Vagina (tissue), 2 donors: ENCODE measurements at regions of chr1 and their contacts with region 1.

Region 1: DNA sequence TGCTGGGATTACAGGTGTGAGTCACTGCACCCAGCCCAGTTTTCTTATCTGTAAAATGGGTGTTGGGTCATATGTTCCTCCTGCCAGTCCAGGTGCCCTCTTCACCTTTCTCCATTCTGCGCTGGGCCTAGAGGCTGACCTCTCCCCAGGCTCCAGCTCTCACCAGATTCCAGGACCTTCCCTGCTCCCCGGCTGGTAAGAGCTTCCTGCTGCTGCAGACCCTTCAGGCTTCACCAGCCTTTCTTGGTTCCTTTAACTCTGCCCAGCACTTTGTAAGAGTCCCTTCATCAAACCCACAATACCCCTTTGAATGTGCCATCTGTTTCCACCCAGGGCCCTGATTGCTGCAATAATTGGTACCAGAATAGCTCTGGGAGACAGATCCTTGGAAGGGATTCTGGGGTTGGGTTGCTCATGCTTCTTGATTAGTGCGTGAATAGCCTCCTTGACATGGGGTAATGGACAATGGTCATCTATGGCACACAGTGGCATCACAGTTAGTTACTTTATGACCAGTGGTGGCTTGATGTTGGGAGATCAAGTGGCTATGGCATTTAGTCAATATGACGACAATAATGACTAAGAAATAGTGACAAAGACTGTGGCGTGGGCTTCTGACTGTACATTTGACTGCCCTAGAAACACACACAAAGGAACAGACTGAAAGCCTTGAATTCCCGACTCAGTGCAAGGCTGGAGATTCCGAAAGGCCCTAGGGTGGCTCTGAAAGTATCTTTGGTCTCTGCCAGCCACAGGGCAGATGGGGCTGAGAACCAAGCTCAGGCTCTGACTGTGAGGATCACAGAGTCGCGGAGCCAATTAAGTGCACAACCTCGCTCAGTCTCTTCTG is 67.3 kb downstream of the SLC9A1 start:
- DNase-seq: no peak
- H3K4me3 ChIP-seq: no peak overlapping the region
- H3K27ac ChIP-seq: no peak overlapping the region
- H3K4me1 ChIP-seq: no peaks in the 10 kb centered on the region
- H3K27me3 ChIP-seq: no peaks in the 10 kb centered on the region
- CTCF ChIP-seq: no peak
- POLR2A ChIP-seq: no peak

Region 2: DNA sequence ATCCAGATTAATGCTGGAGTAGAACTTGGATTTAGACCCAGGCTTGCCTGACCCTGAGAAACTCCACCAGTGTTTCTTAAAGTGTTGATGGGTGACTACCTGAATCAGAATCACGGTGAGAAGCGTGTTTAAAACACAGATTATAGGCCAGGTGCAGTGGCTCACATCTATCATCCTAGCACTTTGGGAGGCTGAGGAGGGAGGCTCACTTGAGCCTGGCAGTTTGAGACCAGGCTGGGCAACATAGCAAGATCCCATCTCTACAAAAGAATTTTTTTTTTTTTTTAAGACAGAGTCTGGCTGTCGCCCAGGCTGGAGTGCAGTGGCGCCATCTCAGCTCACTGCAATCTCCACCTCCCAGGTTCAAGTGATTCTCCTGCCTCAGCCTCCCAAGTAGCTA is 18.7 kb before region 1 on chr1:
- intact Hi-C with region 1: loop called (anchors 2 kb)
- DNase-seq: no peak
- H3K4me3 ChIP-seq: no peak overlapping the region
- H3K27ac ChIP-seq: no peak overlapping the region
- H3K4me1 ChIP-seq: peaks cover 8% of the 10 kb centered on the region
- H3K27me3 ChIP-seq: no peaks in the 10 kb centered on the region
- CTCF ChIP-seq: no peak
- POLR2A ChIP-seq: no peak

Region 3: DNA sequence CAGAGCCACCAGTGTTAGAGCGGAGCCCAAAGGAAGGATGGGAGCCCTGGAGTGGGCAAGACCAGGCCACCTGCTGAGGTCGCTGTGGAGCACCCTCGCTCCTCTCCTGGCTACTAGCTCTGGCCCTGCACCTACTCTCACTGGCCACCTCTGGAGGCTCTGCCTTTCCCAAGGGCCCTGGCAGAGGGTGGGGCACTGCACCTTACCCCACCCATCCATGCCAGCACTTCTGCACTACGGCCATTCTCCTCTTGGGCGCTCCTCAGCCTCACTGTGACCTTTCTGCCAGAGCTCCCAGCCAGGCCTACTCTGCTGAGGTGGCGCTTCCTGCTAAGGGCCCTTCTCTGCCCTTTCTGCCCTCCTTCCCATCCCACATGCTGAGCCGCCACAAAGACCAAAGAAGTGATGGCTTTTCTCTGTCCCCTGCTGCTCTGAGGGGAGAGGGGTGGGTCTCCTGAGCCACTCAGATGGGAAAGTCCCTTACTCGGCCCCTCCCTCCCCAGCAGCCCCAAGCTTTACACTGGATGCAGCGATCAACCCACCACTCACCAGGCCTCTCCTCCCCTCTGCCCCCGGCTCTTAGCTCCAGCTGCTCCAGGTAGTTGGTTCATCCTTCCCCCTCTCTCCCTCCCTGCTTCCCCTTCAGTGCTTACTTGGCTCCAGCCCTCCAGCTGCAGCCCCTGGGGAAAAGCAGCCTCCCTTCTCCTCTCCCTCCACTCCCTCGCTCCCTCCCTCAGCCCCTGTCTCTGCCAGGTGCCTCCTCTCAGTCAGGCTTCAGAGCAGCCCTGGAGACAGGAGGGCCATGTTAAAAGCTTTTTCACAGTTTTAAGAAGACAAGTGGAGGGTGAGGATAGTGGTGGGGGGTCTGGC is 219.5 kb after region 1 on chr1:
- intact Hi-C with region 1: no loop called
- DNase-seq: no peak
- H3K4me3 ChIP-seq: no peak overlapping the region
- H3K27ac ChIP-seq: no peak overlapping the region
- H3K4me1 ChIP-seq: no peaks in the 10 kb centered on the region
- H3K27me3 ChIP-seq: no peaks in the 10 kb centered on the region
- CTCF ChIP-seq: no peak
- POLR2A ChIP-seq: no peak